OCI-LY7 (cell line): ENCODE measurements at regions of chr9 and their contacts with region 1.

Region 1: GRCh38 chr9:27586304-27586703 is 13.0 kb upstream of the C9orf72 start:
- DNase-seq: no peak
- H3K4me3 ChIP-seq: no peak overlapping the region
- H3K27ac ChIP-seq: no peak overlapping the region
- H3K4me1 ChIP-seq: peaks cover 8% of the 10 kb centered on the region
- CTCF ChIP-seq: no peak

Region 2: DNA sequence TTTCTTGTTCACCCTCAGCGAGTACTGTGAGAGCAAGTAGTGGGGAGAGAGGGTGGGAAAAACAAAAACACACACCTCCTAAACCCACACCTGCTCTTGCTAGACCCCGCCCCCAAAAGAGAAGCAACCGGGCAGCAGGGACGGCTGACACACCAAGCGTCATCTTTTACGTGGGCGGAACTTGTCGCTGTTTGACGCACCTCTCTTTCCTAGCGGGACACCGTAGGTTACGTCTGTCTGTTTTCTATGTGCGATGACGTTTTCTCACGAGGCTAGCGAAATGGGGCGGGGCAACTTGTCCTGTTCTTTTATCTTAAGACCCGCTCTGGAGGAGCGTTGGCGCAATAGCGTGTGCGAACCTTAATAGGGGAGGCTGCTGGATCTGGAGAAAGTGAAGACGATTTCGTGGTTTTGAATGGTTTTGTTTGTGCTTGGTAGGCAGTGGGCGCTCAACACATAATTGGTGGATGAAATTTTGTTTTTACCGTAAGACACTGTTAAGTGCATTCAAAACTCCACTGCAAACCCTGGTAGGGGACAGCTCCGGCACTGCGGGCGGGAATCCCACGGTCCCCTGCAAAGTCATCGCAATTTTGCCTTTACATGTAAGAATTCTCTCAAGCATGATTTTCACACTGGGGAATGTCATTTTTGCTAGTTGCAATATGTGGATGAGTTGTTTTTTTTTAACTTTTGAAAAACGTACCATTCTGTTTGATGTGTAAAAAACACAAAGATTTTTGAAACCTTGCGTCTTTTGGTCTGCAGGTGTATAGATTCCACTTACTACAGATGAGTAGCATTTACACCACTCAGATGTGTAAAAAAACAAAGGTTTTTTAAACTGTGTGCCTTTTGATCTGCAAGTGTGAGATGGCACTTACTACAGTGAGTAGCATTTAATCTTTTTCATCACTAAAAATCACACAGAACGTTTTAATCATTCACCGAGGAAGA is 12.4 kb before region 1 on chr9:
- CTCF ChIA-PET with region 1: no interaction called
- POLR2A ChIA-PET with region 1: interaction called, 6 read pairs
- intact Hi-C with region 1: loop called (anchors 1 kb)
- DNase-seq: peak; percentile 99
- H3K4me3 ChIP-seq: peak overlapping the region; percentile 72
- H3K27ac ChIP-seq: peak overlapping the region; percentile 79
- H3K4me1 ChIP-seq: peaks cover 13% of the 10 kb centered on the region
- CTCF ChIP-seq: no peak

Region 3: GRCh38 chr9:27610622-27611021 is 24.3 kb after region 1 on chr9:
- CTCF ChIA-PET with region 1: no interaction called
- POLR2A ChIA-PET with region 1: no interaction called
- intact Hi-C with region 1: no loop called
- DNase-seq: no peak
- H3K4me3 ChIP-seq: no peak overlapping the region
- H3K27ac ChIP-seq: no peak overlapping the region
- H3K4me1 ChIP-seq: no peaks in the 10 kb centered on the region
- CTCF ChIP-seq: no peak

Region 4: DNA sequence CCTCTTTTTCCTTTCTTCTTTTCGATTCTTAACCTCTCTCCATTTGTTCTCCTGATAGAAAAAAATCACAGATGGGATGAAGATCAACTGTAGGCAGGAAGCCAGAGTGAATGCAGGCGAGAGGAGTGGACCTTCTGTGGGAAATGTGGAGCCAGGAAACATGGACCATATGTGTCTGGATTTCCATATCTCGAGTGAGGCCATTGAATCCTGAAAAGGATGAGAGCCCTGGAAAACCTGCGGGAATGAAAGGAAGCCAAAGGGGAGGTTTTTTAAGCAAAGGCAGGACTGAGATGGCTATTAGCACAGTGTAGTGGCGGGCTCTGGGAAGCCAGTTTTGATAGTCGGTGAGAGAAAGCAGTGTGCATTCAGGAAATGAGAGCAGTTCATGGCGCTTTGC is 126.5 kb after region 1 on chr9:
- CTCF ChIA-PET with region 1: no interaction called
- POLR2A ChIA-PET with region 1: no interaction called
- intact Hi-C with region 1: no loop called
- DNase-seq: no peak
- H3K4me3 ChIP-seq: no peak overlapping the region
- H3K27ac ChIP-seq: no peak overlapping the region
- H3K4me1 ChIP-seq: no peaks in the 10 kb centered on the region
- CTCF ChIP-seq: no peak